Lower leg skin (tissue), 4 donors: ENCODE measurements at regions of chr2 and their contacts with region 1.

Region 1: DNA sequence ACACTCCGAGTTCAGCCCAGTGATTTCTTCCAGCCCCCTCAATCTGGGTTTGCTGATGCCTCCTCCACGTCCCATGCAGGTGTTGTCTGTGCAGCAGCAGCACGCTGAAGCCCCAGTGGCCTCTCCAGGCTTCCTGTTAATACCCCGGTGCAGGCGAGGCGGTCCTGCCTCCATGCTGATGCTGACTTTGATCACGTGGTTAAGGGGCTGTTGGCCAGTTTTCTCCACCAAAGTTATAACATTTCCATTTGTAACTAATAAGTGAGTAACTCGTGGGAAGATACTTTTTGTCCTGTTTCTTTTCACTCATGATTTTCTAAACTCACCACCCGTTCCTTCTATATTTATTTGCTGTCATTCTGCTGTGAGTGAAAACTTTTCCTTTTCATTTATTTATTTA is 42.5 kb upstream of the TMEM18 start:
- DNase-seq: no peak
- H3K4me3 ChIP-seq: no peak overlapping the region
- CTCF ChIP-seq: no peak
- POLR2A ChIP-seq: no peak

Region 2: GRCh38 chr2:689877-690510 is 29.7 kb before region 1 on chr2:
- intact Hi-C with region 1: loop called (anchors 1 kb)
- DNase-seq: no peak
- H3K4me3 ChIP-seq: no peak overlapping the region
- CTCF ChIP-seq: no peak
- POLR2A ChIP-seq: no peak